ENCODE measurements at regions of chr19 and their contacts with region 1.

Region 1: GRCh38 chr19:12974301-12975220 is 5.2 kb downstream of the DAND5 start:
- DNase-seq: no peak
- H3K4me3 ChIP-seq: no peak overlapping the region
- CTCF ChIP-seq: no peak

Region 2: GRCh38 chr19:12945479-12946091 is 29.0 kb before region 1 on chr19 and contains the start of gene RAD23A:
- CTCF ChIA-PET with region 1: no interaction called
- POLR2A ChIA-PET with region 1: no interaction called
- DNase-seq: peak; percentile 79
- H3K4me3 ChIP-seq: peak within 1 kb of the TSS; percentile 80
- CTCF ChIP-seq: no peak

Region 3: DNA sequence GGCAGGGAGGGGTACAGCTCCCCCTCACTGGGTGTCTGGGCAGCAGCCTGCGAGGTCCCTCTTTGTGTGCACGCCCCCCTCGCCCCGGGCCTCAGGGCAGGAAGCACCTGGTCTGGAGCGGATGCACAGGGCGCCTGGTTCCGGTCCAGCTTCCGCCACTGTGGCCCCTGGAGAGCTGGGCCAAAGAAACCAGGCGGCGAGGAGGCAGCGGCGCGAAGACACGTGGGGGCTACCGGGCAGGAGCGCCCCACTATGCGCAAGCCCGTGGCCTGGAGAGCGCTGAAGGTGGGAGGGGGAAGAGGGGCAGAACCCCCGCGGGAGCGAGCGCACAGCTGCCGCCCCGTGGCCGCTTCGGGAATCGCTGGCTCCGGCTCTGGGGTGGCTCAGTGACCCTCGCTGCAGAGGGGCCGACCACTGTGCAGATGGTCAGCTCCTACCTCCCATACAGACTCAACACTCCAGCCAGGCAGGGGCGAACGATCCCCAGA is 129.8 kb after region 1 on chr19:
- CTCF ChIA-PET with region 1: interaction called, 94 read pairs
- POLR2A ChIA-PET with region 1: no interaction called
- DNase-seq: no peak
- H3K4me3 ChIP-seq: no peak overlapping the region
- CTCF ChIP-seq: peak; percentile 80

Region 4: GRCh38 chr19:13117772-13118423 is 143.3 kb after region 1 on chr19 and contains the start of gene NACC1:
- CTCF ChIA-PET with region 1: interaction called, 10 read pairs
- POLR2A ChIA-PET with region 1: no interaction called
- DNase-seq: no peak
- H3K4me3 ChIP-seq: peak within 1 kb of the TSS; percentile 99
- CTCF ChIP-seq: no peak

Region 5: GRCh38 chr19:13262450-13262849 is 287.9 kb after region 1 on chr19:
- CTCF ChIA-PET with region 1: interaction called, 130 read pairs
- POLR2A ChIA-PET with region 1: interaction called, 4 read pairs
- DNase-seq: no peak
- H3K4me3 ChIP-seq: no peak overlapping the region
- CTCF ChIP-seq: peak; percentile 48

Region 6: DNA sequence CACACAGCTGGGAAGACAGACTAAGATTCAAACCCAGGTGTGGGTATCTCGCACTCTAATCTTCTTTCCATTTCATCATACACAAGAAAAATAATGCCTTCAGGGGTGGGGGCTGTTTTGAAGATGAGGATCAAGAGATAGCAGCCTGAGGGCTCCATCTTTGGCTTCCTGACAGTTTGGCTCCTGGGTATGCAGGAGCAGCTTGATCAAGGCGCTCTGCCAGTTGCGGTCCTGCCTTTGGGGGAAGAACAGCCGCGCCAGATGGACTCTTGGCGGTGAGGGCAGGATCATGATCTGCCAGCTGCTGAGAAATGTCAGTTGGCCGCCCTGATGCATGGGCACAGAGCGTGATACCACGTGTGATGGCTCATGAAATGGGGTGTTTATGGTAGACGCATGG is 294.8 kb after region 1 on chr19:
- CTCF ChIA-PET with region 1: interaction called, 130 read pairs
- POLR2A ChIA-PET with region 1: no interaction called
- DNase-seq: no peak
- H3K4me3 ChIP-seq: no peak overlapping the region
- CTCF ChIP-seq: no peak